ENCODE measurements at regions of chr22 and their contacts with region 1.

Region 1: GRCh38 chr22:30649430-30650007 is 13.9 kb downstream of the SLC35E4 start:
- DNase-seq: no peak
- H3K4me3 ChIP-seq: no peak overlapping the region
- H3K27ac ChIP-seq: no peak overlapping the region
- H3K4me1 ChIP-seq: no peaks in the 10 kb centered on the region
- H3K27me3 ChIP-seq: no peaks in the 10 kb centered on the region
- CTCF ChIP-seq: no peak
- POLR2A ChIP-seq: no peak

Region 2: GRCh38 chr22:30753701-30754100 is 104.2 kb after region 1 on chr22:
- intact Hi-C with region 1: loop called (anchors 2 kb)
- DNase-seq: no peak
- H3K4me3 ChIP-seq: no peak overlapping the region
- H3K27ac ChIP-seq: no peak overlapping the region
- H3K4me1 ChIP-seq: no peaks in the 10 kb centered on the region
- H3K27me3 ChIP-seq: no peaks in the 10 kb centered on the region
- CTCF ChIP-seq: no peak
- POLR2A ChIP-seq: no peak

Region 3: GRCh38 chr22:30931541-30932300 is 282.2 kb after region 1 on chr22:
- intact Hi-C with region 1: no loop called
- DNase-seq: no peak
- H3K4me3 ChIP-seq: no peak overlapping the region
- H3K27ac ChIP-seq: no peak overlapping the region
- H3K4me1 ChIP-seq: no peaks in the 10 kb centered on the region
- H3K27me3 ChIP-seq: no peaks in the 10 kb centered on the region
- CTCF ChIP-seq: no peak
- POLR2A ChIP-seq: no peak